Kidney (tissue), 22 donors: ENCODE measurements at regions of chr12 and their contacts with region 1.

Region 1: GRCh38 chr12:47837190-47838171 is 17.8 kb upstream of the HDAC7 start:
- DNase-seq: peak in 4 of 5 donors; percentile 76 to 85 (median 83)
- H3K4me3 ChIP-seq: no peak overlapping the region
- H3K27ac ChIP-seq: no peak overlapping the region
- H3K4me1 ChIP-seq: peaks cover 2 to 8% (median 3%) of the 10 kb centered on the region in 3 donors
- H3K27me3 ChIP-seq: no peaks in the 10 kb centered on the region
- CTCF ChIP-seq: peak; percentile 91

Region 2: GRCh38 chr12:47715393-47715876 is 122.0 kb before region 1 on chr12:
- intact Hi-C with region 1: loop called (anchors 5 kb)
- DNase-seq: peak; percentile 79 to 94 (median 80)
- H3K4me3 ChIP-seq: no peak overlapping the region
- H3K27ac ChIP-seq: no peak overlapping the region
- H3K4me1 ChIP-seq: peaks cover 0 to 13% (median 5%) of the 10 kb centered on the region in 3 donors
- H3K27me3 ChIP-seq: no peaks in the 10 kb centered on the region
- CTCF ChIP-seq: peak; percentile 77

Region 3: GRCh38 chr12:47779301-47779942 is 58.1 kb before region 1 on chr12:
- intact Hi-C with region 1: loop called (anchors 10 kb)
- DNase-seq: peak; percentile 92 to 95 (median 95)
- H3K4me3 ChIP-seq: no peak overlapping the region
- H3K27ac ChIP-seq: no peak overlapping the region
- H3K4me1 ChIP-seq: peaks cover 0 to 34% (median 11%) of the 10 kb centered on the region in 3 donors
- H3K27me3 ChIP-seq: no peaks in the 10 kb centered on the region
- CTCF ChIP-seq: peak; percentile 96

Region 4: DNA sequence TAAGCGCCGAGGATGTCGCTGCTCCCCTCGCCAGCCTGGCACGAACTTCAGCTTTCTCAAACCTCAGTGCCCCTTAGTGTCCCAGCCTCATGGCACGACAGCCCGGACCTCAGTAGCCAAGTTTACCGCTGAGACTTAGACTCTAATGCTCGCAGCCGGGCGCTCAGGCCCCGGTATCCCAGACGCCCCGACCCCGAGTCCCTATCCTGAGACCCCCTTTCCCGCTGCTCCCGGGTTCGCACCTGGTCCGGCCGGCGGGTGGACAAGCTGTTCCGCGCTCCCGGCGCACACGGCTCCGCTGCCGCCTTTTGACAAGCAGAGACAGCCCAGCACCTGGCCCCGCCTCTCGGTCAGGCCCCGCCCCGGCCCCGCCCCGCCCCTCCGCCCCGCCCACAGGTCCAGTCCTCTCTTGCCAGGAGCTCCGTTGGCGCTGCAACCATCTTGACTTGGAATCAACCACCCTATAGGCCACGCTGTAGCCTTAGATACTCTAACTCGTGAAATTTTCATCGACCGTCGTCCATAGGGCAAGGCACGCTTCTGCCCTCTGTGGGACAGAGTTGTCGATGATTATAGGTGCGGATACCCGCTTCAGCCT is 67.3 kb after region 1 on chr12 and contains the start of gene VDR:
- intact Hi-C with region 1: no loop called
- DNase-seq: peak; percentile 87 to 97 (median 92)
- H3K4me3 ChIP-seq: peak within 1 kb of the TSS; percentile 55 to 87 (median 70)
- H3K27ac ChIP-seq: peak within 1 kb of the TSS; percentile 90
- H3K4me1 ChIP-seq: peaks cover 0 to 25% (median 22%) of the 10 kb centered on the region in 3 donors
- H3K27me3 ChIP-seq: peaks cover 4% of the 10 kb centered on the region
- CTCF ChIP-seq: peak; percentile 5
- total RNA-seq, gene VDR: 14.8 TPM

Region 5: GRCh38 chr12:48197971-48198671 is 360.6 kb after region 1 on chr12:
- intact Hi-C with region 1: no loop called
- DNase-seq: peak; percentile 97 to 98 (median 98)
- H3K4me3 ChIP-seq: peak overlapping the region; percentile 92 to 97 (median 93)
- H3K27ac ChIP-seq: peak overlapping the region; percentile 94 to 96
- H3K4me1 ChIP-seq: peaks cover 0 to 3% (median 2%) of the 10 kb centered on the region in 3 donors
- H3K27me3 ChIP-seq: no peaks in the 10 kb centered on the region
- CTCF ChIP-seq: no peak